ENCODE measurements at regions of chr11 and their contacts with region 1.

Region 1: GRCh38 chr11:103927535-103927934 is 108.9 kb upstream of the DDI1 start:
- DNase-seq: no peak
- ATAC-seq: no peak
- H3K4me3 Mint-ChIP-seq: no peak overlapping the region
- H3K27ac Mint-ChIP-seq: no peak overlapping the region
- H3K4me1 Mint-ChIP-seq: peaks cover 13% of the 10 kb centered on the region
- H3K27me3 Mint-ChIP-seq: no peaks in the 10 kb centered on the region
- CTCF ChIP-seq: no peak

Region 2: DNA sequence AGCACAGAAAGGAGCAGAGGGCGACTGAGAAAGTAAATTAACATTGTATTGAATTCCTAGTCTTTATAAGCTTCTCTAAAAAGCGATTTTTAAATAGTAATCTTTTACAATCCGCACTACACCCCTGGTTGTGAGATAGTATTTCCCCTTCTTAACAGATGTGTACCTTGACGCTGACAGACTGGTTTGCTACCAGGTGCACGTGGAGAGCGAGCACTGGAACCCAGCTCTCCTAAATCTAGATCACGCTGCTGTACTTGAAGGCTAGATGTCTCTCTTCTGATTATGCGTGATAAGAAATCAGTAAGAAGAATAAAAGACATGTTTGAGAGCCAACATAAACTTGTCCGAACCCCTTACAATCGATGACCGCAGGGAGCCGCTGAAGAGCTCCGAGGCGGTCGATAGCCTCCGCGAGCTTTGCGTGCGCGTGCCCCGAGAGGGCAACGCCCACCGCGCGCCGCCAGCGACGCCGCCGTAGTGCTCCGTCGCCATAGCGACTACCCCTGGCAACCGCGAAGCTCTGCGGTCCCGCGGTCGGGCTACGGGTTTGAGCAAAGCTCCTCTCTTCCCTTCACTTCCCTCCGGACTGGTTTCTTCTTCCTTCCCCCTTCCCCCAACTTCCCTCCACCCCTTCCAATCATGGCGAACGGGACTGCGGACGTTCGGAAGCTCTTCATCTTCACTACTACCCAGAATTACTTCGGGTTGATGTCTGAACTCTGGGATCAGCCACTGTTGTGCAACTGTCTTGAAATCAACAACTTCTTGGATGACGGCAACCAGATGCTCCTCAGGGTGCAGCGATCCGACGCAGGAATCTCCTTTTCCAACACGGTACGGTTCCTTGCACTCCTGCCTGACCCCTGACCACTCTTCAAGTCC is 818.4 kb before region 1 on chr11 and contains the start of gene DYNC2H1:
- CTCF ChIA-PET with region 1: no interaction called
- POLR2A ChIA-PET with region 1: no interaction called
- intact Hi-C with region 1: no loop called
- DNase-seq: peak; percentile 84
- ATAC-seq: peak; percentile 94
- H3K4me3 Mint-ChIP-seq: peak within 1 kb of the TSS; percentile 95
- H3K27ac Mint-ChIP-seq: peak within 1 kb of the TSS; percentile 85
- H3K4me1 Mint-ChIP-seq: peaks cover 13% of the 10 kb centered on the region
- H3K27me3 Mint-ChIP-seq: peaks cover 6% of the 10 kb centered on the region
- CTCF ChIP-seq: no peak
- total RNA-seq, gene DYNC2H1: 2.6 and 3.2 TPM in 2 replicates

Region 3: DNA sequence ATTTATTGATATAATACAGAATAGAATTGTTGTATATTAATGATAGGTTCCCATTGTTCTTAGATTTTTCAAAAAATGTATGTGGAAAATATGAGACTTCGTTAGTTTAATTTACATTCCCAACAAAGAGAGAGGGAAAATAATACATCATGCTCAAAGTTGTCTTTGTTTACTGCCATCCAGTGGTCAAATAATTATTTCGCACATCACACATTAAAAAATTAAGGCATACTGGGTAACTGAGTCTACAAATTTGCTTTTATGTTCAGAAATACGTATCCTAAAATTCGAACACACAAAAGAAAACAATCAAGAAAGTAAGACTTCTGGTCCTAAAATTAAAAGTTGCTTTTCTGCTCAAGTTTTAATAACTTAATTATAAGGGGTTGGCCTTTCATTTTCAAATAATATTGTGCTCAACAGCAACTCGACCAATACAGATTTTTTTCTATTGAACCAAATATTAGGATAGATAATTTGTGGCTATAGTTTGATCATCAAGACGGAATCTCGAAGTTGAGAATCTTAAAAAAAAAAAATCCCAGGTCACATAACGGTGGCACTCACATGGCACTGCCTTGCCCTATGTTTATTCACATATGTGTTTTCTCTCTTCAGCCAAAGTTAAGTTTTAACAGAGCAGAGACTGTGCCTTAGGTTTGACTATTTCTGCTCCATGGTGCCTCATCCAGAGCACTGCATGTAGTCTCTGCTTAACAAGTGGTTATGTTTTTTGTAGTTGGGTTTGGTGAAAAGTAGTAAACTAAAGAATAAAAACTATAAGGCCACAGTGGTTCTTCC is 224.1 kb after region 1 on chr11:
- CTCF ChIA-PET with region 1: no interaction called
- POLR2A ChIA-PET with region 1: no interaction called
- intact Hi-C with region 1: loop called (anchors 2 kb)
- DNase-seq: no peak
- ATAC-seq: no peak
- H3K4me3 Mint-ChIP-seq: no peak overlapping the region
- H3K27ac Mint-ChIP-seq: no peak overlapping the region
- H3K4me1 Mint-ChIP-seq: peaks cover 9% of the 10 kb centered on the region
- H3K27me3 Mint-ChIP-seq: no peaks in the 10 kb centered on the region
- CTCF ChIP-seq: no peak

Region 4: DNA sequence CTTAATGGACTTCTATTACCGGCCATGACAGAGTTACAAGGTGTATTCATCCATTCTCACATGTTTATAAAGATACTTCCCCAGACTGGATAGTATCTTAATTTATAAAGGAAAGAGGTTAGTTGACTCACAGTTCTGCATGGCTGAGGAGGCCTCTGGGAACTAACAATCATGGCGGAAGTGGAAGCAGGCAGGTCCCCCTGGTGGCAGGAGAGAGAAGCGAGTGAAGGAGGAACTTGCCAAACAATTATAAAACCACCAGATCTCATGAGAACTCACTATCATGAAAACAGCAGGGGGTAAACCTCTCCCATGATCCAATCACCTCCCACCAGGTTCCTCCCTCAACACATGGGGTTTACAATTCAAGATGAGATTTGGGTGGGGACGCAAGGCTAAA is 406.4 kb after region 1 on chr11:
- CTCF ChIA-PET with region 1: no interaction called
- POLR2A ChIA-PET with region 1: no interaction called
- intact Hi-C with region 1: loop called (anchors 10 kb)
- DNase-seq: no peak
- ATAC-seq: no peak
- H3K4me3 Mint-ChIP-seq: no peak overlapping the region
- H3K27ac Mint-ChIP-seq: no peak overlapping the region
- H3K4me1 Mint-ChIP-seq: peaks cover 2% of the 10 kb centered on the region
- H3K27me3 Mint-ChIP-seq: no peaks in the 10 kb centered on the region
- CTCF ChIP-seq: no peak

Region 5: DNA sequence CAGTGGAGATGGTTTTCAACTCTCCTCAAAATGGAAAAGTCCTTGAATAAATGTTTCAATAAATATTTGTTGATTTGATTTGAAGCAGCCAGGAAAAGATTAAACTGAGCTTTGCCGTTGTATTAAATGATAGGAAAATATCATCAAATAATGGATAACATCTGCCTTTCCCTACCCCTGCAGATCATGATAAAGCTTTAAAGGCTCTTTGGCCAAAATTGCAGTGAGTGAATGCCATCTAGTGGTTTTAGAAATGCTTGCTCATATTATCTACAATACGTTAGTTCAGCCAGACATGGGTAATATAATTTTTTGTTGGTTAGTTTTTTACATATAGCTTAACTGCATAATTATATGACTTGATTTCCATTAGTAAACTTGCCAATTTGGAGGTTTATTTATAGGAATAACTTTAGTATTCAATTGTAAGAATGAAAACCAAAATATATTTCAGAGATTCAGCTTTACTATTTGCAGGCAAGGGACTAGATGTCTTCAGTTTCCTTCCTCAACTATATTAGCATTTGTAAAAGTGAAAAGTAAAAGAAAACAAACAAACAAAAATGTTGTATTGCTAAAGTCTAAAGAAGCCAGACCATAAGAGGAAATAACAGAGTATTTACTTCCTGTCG is 1935.3 kb after region 1 on chr11:
- CTCF ChIA-PET with region 1: no interaction called
- POLR2A ChIA-PET with region 1: no interaction called
- intact Hi-C with region 1: loop called (anchors 5 kb)
- DNase-seq: no peak
- ATAC-seq: no peak
- H3K4me3 Mint-ChIP-seq: no peak overlapping the region
- H3K27ac Mint-ChIP-seq: no peak overlapping the region
- H3K4me1 Mint-ChIP-seq: no peaks in the 10 kb centered on the region
- H3K27me3 Mint-ChIP-seq: peaks cover 1% of the 10 kb centered on the region
- CTCF ChIP-seq: no peak